ENCODE measurements at regions of chr2 and their contacts with region 1.

Region 1: GRCh38 chr2:44087036-44087713 is 81.5 kb upstream of the PPM1B start:
- DNase-seq: peak; percentile 82 to 85
- ATAC-seq: peak; percentile 90 to 93
- H3K4me3 ChIP-seq: peak overlapping the region; percentile 42 to 46 (median 44)
- H3K27ac ChIP-seq: peak overlapping the region; percentile 82 to 90 (median 86)
- H3K4me1 ChIP-seq: peaks cover 24 to 34% of the 10 kb centered on the region in 2 donors
- H3K27me3 ChIP-seq: no peaks in the 10 kb centered on the region
- CTCF ChIP-seq: peak; percentile 92 to 99 (median 95)
- POLR2A ChIP-seq: peak; percentile 35 to 80

Region 2: GRCh38 chr2:43950383-43951008 is 136.7 kb before region 1 on chr2:
- in situ Hi-C with region 1: no loop called
- intact Hi-C with region 1: no loop called
- DNase-seq: no peak
- ATAC-seq: no peak
- H3K4me3 ChIP-seq: no peak overlapping the region
- H3K27ac ChIP-seq: no peak overlapping the region
- H3K4me1 ChIP-seq: no peaks in the 10 kb centered on the region
- H3K27me3 ChIP-seq: no peaks in the 10 kb centered on the region
- CTCF ChIP-seq: peak in 2 of 5 experiments; percentile 21 to 23
- POLR2A ChIP-seq: no peak

Region 3: GRCh38 chr2:44130441-44130840 is 43.3 kb after region 1 on chr2:
- in situ Hi-C with region 1: no loop called
- intact Hi-C with region 1: loop called (anchors 5 kb)
- DNase-seq: no peak
- ATAC-seq: peak; percentile 75 to 76
- H3K4me3 ChIP-seq: peak overlapping the region in 1 of 4 donors; percentile 14
- H3K27ac ChIP-seq: peak overlapping the region; percentile 80 to 89 (median 86)
- H3K4me1 ChIP-seq: peaks cover 29 to 38% of the 10 kb centered on the region in 2 donors
- H3K27me3 ChIP-seq: no peaks in the 10 kb centered on the region
- CTCF ChIP-seq: no peak
- POLR2A ChIP-seq: peak in 1 of 2 donors; percentile 17

Region 4: DNA sequence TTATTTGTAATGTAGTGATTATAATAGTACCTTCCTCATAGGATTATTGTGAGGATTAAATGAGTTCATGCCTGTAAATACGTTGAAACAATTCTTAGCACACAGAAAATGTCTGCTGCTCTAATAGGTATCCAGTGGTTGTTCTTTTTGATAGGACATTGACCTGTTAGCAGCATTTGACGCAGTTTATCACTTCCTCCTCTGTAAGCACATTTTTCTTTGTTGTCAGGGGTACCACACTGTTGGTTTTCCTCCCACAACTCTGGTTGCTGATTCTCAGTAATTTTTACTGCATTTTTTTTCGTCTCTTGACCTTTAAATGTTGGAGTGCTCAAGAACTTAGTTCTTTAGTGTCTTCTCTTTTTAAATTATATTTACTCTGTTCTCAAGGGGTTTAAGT is 96.9 kb after region 1 on chr2:
- in situ Hi-C with region 1: loop called in 1 of 4 experiments (anchors 10 kb)
- intact Hi-C with region 1: no loop called
- DNase-seq: no peak
- ATAC-seq: no peak
- H3K4me3 ChIP-seq: no peak overlapping the region
- H3K27ac ChIP-seq: peak overlapping the region in 1 of 4 donors; percentile 29
- H3K4me1 ChIP-seq: peaks cover 49 to 55% of the 10 kb centered on the region in 2 donors
- H3K27me3 ChIP-seq: no peaks in the 10 kb centered on the region
- CTCF ChIP-seq: no peak
- POLR2A ChIP-seq: no peak

Region 5: DNA sequence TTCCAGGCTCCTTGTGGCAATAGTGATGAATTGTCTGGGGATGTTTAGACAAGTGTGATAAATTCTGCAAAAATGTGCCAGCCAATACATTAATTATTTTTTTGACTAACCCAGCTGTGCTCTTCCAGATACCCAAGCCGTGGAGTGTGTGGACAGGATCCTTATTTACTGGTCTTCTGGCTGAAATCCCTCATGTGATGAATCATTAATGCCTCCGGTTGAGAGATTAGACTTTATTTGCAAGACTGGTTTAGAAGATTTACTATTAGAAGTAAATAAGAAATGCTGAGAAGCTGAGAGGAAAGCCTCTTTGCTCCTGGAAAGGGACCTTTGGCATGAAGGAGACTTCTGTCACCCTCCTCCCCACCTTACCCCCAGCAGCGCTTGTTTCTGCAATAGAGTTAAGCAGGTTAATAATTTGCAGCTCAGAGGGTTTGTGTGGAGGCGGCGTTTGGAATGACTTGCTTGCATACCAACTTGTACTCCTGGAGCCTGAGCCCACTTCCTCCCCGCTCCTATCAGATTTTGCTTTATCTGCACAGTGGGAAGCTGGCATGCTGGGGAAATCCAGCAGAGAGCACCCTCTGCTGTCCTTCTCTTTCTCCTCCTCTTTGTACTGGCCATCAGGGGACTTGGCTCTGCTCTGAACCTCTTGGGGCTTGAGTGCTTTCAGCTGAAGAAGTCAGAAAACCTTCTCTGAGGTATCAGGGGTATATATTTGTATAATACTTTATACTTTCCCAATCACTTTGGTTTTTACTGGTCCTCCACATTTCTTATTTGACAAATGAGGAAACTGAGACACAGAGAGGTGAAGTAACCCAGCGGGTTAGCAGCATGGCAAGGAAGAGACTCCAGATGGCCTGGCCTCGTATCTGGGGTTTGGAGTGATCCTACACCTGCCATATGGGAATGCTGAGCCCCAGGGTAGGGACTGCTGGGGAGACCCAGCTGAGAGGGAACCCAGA is 204.4 kb after region 1 on chr2:
- in situ Hi-C with region 1: loop called in 1 of 4 experiments (anchors 25 kb)
- intact Hi-C with region 1: loop called (anchors 1 kb)
- DNase-seq: peak; percentile 27 to 38
- ATAC-seq: peak; percentile 91 to 93
- H3K4me3 ChIP-seq: peak overlapping the region in 3 of 4 donors; percentile 10 to 32 (median 29)
- H3K27ac ChIP-seq: no peak overlapping the region
- H3K4me1 ChIP-seq: peaks cover 7 to 10% of the 10 kb centered on the region in 2 donors
- H3K27me3 ChIP-seq: no peaks in the 10 kb centered on the region
- CTCF ChIP-seq: peak; percentile 48 to 68 (median 64)
- POLR2A ChIP-seq: no peak

Region 6: DNA sequence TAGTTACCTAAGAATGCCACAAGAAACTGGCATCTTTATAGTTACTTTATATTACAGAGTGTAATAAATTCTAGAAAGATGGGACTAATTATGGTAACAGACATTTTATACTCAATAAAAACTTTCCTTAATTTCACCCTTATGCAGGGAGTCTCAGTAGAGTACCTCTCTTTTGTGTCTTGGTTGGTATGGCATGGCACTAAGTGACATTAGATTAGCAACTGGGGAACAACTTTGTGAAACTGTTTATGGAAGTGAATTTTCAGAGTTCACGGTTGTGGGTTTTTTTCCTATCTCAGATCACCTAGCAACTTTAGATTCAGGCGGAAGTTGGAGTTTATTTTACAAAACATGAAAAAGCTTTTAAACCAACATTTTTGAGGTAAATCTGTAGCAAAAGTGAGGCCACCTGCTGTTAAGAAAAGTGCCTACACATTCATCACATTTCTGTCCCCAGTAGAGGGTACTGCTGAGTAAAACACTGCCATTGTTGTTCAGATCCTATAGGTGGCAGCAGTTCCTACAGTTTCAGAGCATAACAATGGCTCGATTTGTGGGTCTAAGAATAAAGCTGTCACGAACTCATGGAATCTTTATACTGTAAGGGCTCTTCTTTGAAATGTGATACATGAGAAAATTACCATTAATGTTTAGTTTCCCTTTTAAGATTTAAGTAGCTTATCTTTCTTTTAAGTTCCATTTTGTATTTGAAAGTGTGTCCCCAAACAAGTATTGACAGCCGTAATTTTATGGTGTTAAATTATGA is 392.1 kb after region 1 on chr2:
- in situ Hi-C with region 1: no loop called
- intact Hi-C with region 1: loop called (anchors 5 kb)
- DNase-seq: peak in 1 of 2 donors; percentile 13
- ATAC-seq: peak; percentile 99 to 100
- H3K4me3 ChIP-seq: no peak overlapping the region
- H3K27ac ChIP-seq: no peak overlapping the region
- H3K4me1 ChIP-seq: peaks cover 3 to 6% of the 10 kb centered on the region in 2 donors
- H3K27me3 ChIP-seq: no peaks in the 10 kb centered on the region
- CTCF ChIP-seq: peak; percentile 80 to 98 (median 94)
- POLR2A ChIP-seq: no peak

Measured in gastrocnemius medialis (tissue), 4 donors.